Endothelial cell of umbilical vein (primary cell): ENCODE measurements at regions of chr15 and their contacts with region 1.

Region 1: DNA sequence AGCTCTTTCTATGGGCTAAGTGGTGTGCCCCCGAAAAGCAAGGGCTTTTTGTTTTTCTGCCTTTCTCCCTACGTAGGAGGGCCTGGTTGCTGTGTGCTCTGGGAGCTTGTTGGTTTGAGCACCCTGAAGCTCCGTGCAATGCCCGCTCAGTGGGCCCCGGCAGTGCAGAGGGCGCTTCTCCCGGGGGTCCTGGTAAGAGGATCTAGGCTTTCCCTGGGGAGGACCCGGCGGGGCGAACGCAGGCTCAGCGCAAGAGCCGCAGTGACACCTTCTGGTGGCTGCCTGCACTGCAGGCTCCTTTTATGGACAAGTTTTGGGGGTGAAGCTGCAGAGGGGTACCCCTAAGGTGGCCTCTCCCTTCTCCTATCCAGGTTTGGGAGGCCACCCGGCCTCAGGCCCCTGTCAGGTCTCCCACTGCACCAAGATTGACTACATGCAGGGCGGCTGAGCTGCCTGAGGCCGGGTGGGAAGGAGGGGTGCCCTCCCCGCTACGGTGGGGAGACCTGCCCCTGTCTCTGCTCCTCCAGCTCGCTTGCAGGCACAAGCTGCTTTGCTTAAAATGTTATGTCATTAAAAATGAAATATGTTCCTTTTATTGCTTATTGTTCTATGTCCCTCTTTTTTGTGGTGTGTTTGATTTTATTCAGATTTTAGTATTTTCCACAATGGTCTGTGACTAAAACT is 387.9 kb downstream of the GABRG3 start:
- DNase-seq: no peak
- H3K4me3 ChIP-seq: no peak overlapping the region
- H3K27ac ChIP-seq: no peak overlapping the region
- H3K4me1 ChIP-seq: no peaks in the 10 kb centered on the region
- H3K27me3 ChIP-seq: no peaks in the 10 kb centered on the region
- CTCF ChIP-seq: peak in 1 of 2 donors; percentile 21
- POLR2A ChIP-seq: no peak

Region 2: GRCh38 chr15:27059610-27060202 is 299.2 kb before region 1 on chr15:
- CTCF ChIA-PET with region 1: no interaction called
- POLR2A ChIA-PET with region 1: no interaction called
- dilution Hi-C with region 1: no loop called
- intact Hi-C with region 1: loop called (anchors 2 kb)
- DNase-seq: no peak
- H3K4me3 ChIP-seq: no peak overlapping the region
- H3K27ac ChIP-seq: no peak overlapping the region
- H3K4me1 ChIP-seq: no peaks in the 10 kb centered on the region
- H3K27me3 ChIP-seq: no peaks in the 10 kb centered on the region
- CTCF ChIP-seq: peak; percentile 25 to 36
- POLR2A ChIP-seq: no peak

Region 3: GRCh38 chr15:27454281-27455075 is 95.6 kb after region 1 on chr15:
- CTCF ChIA-PET with region 1: no interaction called
- POLR2A ChIA-PET with region 1: no interaction called
- dilution Hi-C with region 1: no loop called
- intact Hi-C with region 1: no loop called
- DNase-seq: no peak
- H3K4me3 ChIP-seq: no peak overlapping the region
- H3K27ac ChIP-seq: no peak overlapping the region
- H3K4me1 ChIP-seq: no peaks in the 10 kb centered on the region
- H3K27me3 ChIP-seq: no peaks in the 10 kb centered on the region
- CTCF ChIP-seq: no peak
- POLR2A ChIP-seq: no peak

Region 4: GRCh38 chr15:27660676-27661075 is 301.8 kb after region 1 on chr15:
- CTCF ChIA-PET with region 1: no interaction called
- POLR2A ChIA-PET with region 1: no interaction called
- dilution Hi-C with region 1: no loop called
- intact Hi-C with region 1: no loop called
- DNase-seq: no peak
- H3K4me3 ChIP-seq: no peak overlapping the region
- H3K27ac ChIP-seq: no peak overlapping the region
- H3K4me1 ChIP-seq: no peaks in the 10 kb centered on the region
- H3K27me3 ChIP-seq: no peaks in the 10 kb centered on the region
- CTCF ChIP-seq: no peak
- POLR2A ChIP-seq: no peak